MCF 10A (cell line): ENCODE measurements at regions of chr17 and their contacts with region 1.

Region 1: DNA sequence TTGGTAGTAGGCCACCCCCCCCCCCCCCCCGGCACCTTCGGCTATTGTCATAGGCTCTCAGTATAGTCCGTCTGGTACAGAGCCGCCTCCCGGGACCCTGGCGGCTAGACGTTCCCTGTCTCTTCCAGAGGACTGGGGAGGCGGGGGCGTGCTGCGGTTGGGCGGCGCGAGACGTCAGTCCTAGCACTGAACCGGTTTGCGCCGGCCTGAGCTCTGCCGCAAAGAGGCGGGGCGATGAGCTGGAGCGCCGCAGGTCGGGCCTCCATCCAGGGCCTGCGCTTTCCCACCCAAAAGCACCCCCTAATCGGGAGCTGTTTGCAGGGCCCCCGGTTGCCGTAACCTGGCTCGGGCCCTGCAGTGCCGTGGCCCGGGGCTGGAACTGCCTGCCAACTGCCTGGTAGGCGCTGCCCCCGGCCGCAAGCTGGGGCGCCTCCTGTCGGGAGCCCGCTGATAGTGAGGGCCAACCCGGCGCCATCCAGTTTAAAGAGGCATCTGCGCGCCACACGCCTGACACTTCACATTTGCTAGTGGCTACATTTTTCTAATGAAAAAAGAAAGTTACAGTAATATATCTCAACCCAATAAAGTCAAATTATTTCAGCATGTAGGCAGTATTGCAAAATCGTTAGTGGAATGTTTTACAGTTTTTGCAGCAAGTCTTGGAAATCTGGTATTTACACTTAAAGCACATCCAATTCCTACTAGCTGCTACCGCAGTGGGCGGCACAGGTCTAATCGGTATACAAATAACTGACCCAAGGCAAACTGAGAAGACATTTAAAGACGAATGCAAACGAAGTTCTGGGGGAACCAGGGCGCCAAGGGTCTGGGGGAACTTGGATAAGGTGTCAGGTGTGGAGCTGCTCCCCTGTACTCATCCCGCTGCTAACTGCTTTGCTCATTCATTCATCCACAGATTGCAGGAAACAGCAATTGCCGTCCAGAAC is 748 bp upstream of the USP22 start:
- DNase-seq: peak; percentile 98
- H3K4me3 Mint-ChIP-seq: peak overlapping the region; percentile 94
- H3K27ac Mint-ChIP-seq: no peak overlapping the region
- H3K4me1 Mint-ChIP-seq: peaks cover 6% of the 10 kb centered on the region
- H3K27me3 Mint-ChIP-seq: no peaks in the 10 kb centered on the region
- CTCF ChIP-seq: peak; percentile 92

Region 2: DNA sequence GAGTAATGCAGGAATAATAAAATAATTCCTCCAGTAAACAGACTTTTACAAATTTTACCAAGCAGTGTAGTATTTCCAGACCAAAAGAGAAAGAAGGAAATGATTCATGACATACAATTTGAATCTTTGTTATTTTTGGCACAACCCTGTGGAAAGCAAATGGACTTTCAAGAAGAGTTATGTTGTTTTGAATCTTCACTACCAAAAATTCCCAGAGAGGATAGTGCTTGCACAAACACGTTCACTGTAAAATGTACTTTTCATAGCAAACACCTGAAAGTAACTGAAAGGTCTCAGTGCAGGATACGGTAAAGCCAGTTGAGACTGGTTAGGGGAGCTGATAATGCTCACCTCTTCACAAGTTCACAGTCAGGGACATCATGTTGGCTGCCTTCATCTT is 107.8 kb before region 1 on chr17:
- CTCF ChIA-PET with region 1: interaction called, 3 read pairs
- POLR2A ChIA-PET with region 1: interaction called, 10 read pairs
- intact Hi-C with region 1: no loop called
- DNase-seq: peak; percentile 89
- H3K4me3 Mint-ChIP-seq: peak overlapping the region; percentile 51
- H3K27ac Mint-ChIP-seq: peak overlapping the region; percentile 87
- H3K4me1 Mint-ChIP-seq: peaks cover 20% of the 10 kb centered on the region
- H3K27me3 Mint-ChIP-seq: no peaks in the 10 kb centered on the region
- CTCF ChIP-seq: no peak

Region 3: DNA sequence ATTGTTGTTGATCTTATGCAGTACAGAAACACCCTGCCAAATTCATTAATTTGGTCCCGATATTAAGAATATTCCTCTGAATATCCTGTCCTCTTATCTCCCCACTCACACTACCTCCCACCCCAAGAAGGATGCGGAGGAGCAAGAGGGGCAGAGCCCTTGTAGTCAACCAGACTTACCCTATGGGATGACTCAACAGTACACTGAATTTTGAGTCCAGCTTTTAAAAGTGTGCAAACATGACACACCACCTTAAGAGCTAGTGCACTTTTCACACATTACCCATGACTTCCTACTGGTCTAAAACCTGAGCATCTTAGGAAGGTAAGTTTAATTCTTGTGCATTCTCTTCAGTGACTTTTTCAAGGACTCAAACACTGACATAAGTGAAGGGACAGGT is 10.2 kb before region 1 on chr17:
- CTCF ChIA-PET with region 1: interaction called, 11 read pairs
- POLR2A ChIA-PET with region 1: interaction called, 18 read pairs
- intact Hi-C with region 1: no loop called
- DNase-seq: no peak
- H3K4me3 Mint-ChIP-seq: no peak overlapping the region
- H3K27ac Mint-ChIP-seq: no peak overlapping the region
- H3K4me1 Mint-ChIP-seq: peaks cover 66% of the 10 kb centered on the region
- H3K27me3 Mint-ChIP-seq: no peaks in the 10 kb centered on the region
- CTCF ChIP-seq: no peak

Region 4: DNA sequence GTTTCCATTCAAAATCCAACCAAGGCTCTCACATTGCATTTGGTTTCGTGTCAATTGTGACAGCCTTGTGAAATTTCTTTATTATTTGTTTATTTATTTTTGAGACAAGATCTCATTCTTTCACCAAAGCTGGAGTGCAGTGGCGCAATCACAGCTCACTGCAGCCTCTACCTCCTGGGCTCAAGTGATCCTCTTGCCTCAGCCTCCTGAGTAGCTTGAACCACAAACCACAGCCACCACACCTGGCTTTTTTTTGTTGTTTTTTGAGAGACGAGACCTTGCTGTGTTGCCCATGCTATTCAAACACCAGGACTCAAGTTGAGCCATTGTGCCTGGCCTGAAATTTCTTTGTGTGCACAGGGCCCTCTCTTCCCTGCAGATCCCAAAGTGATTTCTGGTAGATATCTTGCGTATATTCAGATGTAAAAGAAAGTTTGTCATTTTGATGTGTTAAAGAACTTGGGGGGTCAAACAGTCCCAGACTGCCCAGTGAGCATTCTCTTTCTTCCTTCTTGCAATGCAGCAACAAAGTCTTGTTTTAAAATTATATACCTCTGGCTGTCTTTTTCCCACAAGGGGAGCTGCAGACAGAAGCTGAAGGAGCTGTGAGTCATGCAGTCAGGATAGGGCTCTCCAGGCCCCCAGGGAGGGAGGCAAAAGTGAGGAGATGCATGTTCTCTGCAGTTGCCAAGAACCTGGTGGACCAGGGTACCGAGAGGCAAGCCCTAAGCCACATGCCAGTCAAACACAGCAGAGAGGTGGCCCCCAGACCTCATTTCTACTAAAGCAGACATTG is 14.7 kb after region 1 on chr17:
- CTCF ChIA-PET with region 1: interaction called, 9 read pairs
- POLR2A ChIA-PET with region 1: interaction called, 22 read pairs
- intact Hi-C with region 1: no loop called
- DNase-seq: peak; percentile 39
- H3K4me3 Mint-ChIP-seq: no peak overlapping the region
- H3K27ac Mint-ChIP-seq: no peak overlapping the region
- H3K4me1 Mint-ChIP-seq: no peaks in the 10 kb centered on the region
- H3K27me3 Mint-ChIP-seq: no peaks in the 10 kb centered on the region
- CTCF ChIP-seq: no peak

Region 5: GRCh38 chr17:21098934-21099689 is 55.6 kb after region 1 on chr17:
- CTCF ChIA-PET with region 1: interaction called, 20 read pairs
- POLR2A ChIA-PET with region 1: interaction called, 9 read pairs
- intact Hi-C with region 1: loop called (anchors 1 kb)
- DNase-seq: peak; percentile 88
- H3K4me3 Mint-ChIP-seq: peak overlapping the region; percentile 83
- H3K27ac Mint-ChIP-seq: no peak overlapping the region
- H3K4me1 Mint-ChIP-seq: peaks cover 8% of the 10 kb centered on the region
- H3K27me3 Mint-ChIP-seq: no peaks in the 10 kb centered on the region
- CTCF ChIP-seq: no peak

Region 6: GRCh38 chr17:21126645-21127510 is 83.3 kb after region 1 on chr17 and contains the start of gene DHRS7B:
- CTCF ChIA-PET with region 1: interaction called, 20 read pairs
- POLR2A ChIA-PET with region 1: interaction called, 33 read pairs
- intact Hi-C with region 1: loop called (anchors 2 kb)
- DNase-seq: peak; percentile 98
- H3K4me3 Mint-ChIP-seq: peak within 1 kb of the TSS; percentile 97
- H3K27ac Mint-ChIP-seq: peak within 1 kb of the TSS; percentile 92
- H3K4me1 Mint-ChIP-seq: peaks cover 15% of the 10 kb centered on the region
- H3K27me3 Mint-ChIP-seq: no peaks in the 10 kb centered on the region
- CTCF ChIP-seq: no peak
- total RNA-seq, gene DHRS7B: 18.0 and 21.6 TPM in 2 replicates

Region 7: GRCh38 chr17:21214015-21214776 is 170.6 kb after region 1 on chr17 and contains the start of gene TMEM11:
- CTCF ChIA-PET with region 1: interaction called, 5 read pairs
- POLR2A ChIA-PET with region 1: interaction called, 42 read pairs
- intact Hi-C with region 1: loop called (anchors 5 kb)
- DNase-seq: peak; percentile 94
- H3K4me3 Mint-ChIP-seq: peak within 1 kb of the TSS; percentile 88
- H3K27ac Mint-ChIP-seq: peak within 1 kb of the TSS; percentile 96
- H3K4me1 Mint-ChIP-seq: peaks cover 39% of the 10 kb centered on the region
- H3K27me3 Mint-ChIP-seq: no peaks in the 10 kb centered on the region
- CTCF ChIP-seq: peak; percentile 6
- total RNA-seq, gene TMEM11: 27.8 and 33.5 TPM in 2 replicates

Region 8: DNA sequence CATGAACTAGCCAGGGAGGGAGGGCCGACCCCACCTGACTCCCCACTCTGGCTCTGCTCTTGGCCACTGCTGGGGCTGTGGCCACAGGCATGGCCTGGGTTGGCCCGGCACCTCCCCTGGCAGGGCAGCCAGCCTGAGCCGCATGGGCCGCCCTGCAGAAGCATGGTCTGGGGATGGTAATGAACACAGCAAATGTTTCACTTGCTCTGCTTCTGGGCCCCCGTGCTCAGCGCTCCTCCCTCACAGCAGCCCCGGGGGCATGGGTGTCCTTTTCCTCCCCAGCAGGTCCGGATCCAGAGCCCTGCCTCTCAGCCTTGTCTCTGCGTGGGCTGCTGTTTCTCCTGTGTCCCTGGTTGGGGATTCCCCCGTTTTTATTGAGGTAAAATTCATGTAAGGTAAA is 301.7 kb after region 1 on chr17:
- CTCF ChIA-PET with region 1: no interaction called
- POLR2A ChIA-PET with region 1: no interaction called
- intact Hi-C with region 1: no loop called
- DNase-seq: peak; percentile 46
- H3K4me3 Mint-ChIP-seq: no peak overlapping the region
- H3K27ac Mint-ChIP-seq: no peak overlapping the region
- H3K4me1 Mint-ChIP-seq: peaks cover 4% of the 10 kb centered on the region
- H3K27me3 Mint-ChIP-seq: no peaks in the 10 kb centered on the region
- CTCF ChIP-seq: no peak